ENCODE measurements at regions of chr9 and their contacts with region 1.

Region 1: DNA sequence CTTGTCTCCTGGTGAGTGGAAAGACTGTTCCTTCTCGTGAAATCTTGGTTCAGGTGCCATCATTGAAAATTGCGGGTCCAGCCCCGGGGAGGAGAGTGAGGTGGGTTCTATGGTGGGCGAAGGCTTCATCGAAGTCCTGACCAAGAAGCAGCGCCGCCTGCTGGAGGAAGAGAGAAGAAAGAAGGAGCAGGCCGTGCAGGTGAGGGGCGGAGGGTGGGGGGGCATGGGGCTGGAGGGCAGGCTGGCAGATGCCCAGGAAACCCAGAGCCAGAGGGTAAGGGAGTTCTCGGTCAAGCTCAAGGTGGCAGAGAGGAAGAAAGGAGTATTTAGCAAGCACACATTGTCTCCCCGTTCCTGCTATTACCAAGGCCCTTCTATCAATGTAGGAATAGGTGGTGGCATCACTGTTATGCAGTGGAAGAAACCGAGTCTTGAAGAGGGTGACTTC is 24.3 kb upstream of the POMT1 start:
- DNase-seq: peak; percentile 65
- ATAC-seq: no peak
- H3K4me3 Mint-ChIP-seq: no peak overlapping the region
- H3K27ac Mint-ChIP-seq: no peak overlapping the region
- H3K4me1 Mint-ChIP-seq: peaks cover 2% of the 10 kb centered on the region
- H3K27me3 Mint-ChIP-seq: no peaks in the 10 kb centered on the region

Region 2: DNA sequence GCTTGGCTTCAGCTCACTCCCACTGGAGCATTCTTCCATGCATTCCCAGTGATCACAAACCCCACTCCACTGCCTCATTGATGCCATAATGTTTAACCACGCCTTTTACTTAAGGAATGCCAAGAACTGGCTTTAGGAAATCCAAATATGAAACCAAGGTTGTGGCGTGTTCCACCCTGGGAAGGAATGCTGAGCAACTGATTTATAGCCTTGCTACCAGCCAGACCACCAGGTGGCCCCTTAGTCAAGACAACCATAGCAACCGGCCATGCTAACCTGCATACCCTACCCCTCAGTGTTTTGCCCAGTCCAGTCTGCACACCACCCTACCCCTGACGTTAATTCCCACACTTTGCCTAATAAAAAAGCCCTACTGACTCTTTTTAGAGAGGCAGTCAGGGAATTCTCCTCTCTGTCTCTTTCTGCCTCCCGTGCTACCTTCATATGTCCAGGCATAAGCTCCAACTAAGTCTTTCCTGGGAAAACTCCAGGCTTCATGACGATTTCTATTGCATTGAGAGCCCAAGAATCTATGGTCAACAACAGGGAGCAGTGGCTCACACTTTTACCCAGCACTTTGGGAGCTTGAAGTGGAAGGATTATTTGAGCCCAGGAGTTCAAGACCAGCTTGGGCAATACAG is 111.6 kb before region 1 on chr9:
- CTCF ChIA-PET with region 1: interaction called, 10 read pairs
- DNase-seq: no peak
- ATAC-seq: no peak
- H3K4me3 Mint-ChIP-seq: no peak overlapping the region
- H3K27ac Mint-ChIP-seq: no peak overlapping the region
- H3K4me1 Mint-ChIP-seq: peaks cover 3% of the 10 kb centered on the region
- H3K27me3 Mint-ChIP-seq: no peaks in the 10 kb centered on the region

Region 3: GRCh38 chr9:131491001-131491710 is 12.7 kb after region 1 on chr9:
- CTCF ChIA-PET with region 1: no interaction called
- DNase-seq: no peak
- ATAC-seq: no peak
- H3K4me3 Mint-ChIP-seq: no peak overlapping the region
- H3K27ac Mint-ChIP-seq: no peak overlapping the region
- H3K4me1 Mint-ChIP-seq: no peaks in the 10 kb centered on the region
- H3K27me3 Mint-ChIP-seq: no peaks in the 10 kb centered on the region

Region 4: GRCh38 chr9:131502781-131503625 is 24.6 kb after region 1 on chr9 and contains the start of gene POMT1:
- CTCF ChIA-PET with region 1: interaction called, 12 read pairs
- DNase-seq: peak; percentile 91
- ATAC-seq: peak; percentile 73
- H3K4me3 Mint-ChIP-seq: peak within 1 kb of the TSS; percentile 87
- H3K27ac Mint-ChIP-seq: peak within 1 kb of the TSS; percentile 84
- H3K4me1 Mint-ChIP-seq: peaks cover 62% of the 10 kb centered on the region
- H3K27me3 Mint-ChIP-seq: no peaks in the 10 kb centered on the region
- total RNA-seq, gene POMT1: 41.5 to 53.7 TPM